CD8-positive, alpha-beta T cell (primary cell): ENCODE measurements at regions of chr18 and their contacts with region 1.

Region 1: DNA sequence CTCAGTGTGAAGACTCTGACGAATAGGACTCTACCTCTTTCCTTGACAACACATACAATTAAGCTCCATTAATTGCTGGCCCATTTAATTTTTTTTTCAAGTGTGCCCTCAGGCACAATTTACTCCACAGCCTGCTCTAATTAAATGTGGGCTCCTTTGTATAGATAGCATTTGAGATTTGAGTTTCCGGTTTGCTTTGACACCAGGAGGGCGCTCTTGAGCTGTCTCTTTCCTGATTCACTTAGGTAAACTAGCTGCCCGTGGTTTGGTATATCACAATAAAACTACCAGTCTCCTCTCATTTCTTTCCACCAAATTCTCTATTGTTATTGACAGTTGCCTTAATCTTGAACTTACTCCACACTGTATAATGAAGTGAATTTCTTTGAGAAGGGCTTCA is 666.0 kb downstream of the DSC3 start:
- DNase-seq: no peak
- ATAC-seq: no peak
- H3K4me3 ChIP-seq: no peak overlapping the region
- H3K4me3 Mint-ChIP-seq: no peak overlapping the region
- H3K27ac ChIP-seq: no peak overlapping the region
- H3K27ac Mint-ChIP-seq: no peak overlapping the region
- H3K4me1 ChIP-seq: no peaks in the 10 kb centered on the region
- H3K4me1 Mint-ChIP-seq: no peaks in the 10 kb centered on the region
- H3K27me3 ChIP-seq: no peaks in the 10 kb centered on the region
- H3K27me3 Mint-ChIP-seq: no peaks in the 10 kb centered on the region
- CTCF ChIP-seq: no peak

Region 2: DNA sequence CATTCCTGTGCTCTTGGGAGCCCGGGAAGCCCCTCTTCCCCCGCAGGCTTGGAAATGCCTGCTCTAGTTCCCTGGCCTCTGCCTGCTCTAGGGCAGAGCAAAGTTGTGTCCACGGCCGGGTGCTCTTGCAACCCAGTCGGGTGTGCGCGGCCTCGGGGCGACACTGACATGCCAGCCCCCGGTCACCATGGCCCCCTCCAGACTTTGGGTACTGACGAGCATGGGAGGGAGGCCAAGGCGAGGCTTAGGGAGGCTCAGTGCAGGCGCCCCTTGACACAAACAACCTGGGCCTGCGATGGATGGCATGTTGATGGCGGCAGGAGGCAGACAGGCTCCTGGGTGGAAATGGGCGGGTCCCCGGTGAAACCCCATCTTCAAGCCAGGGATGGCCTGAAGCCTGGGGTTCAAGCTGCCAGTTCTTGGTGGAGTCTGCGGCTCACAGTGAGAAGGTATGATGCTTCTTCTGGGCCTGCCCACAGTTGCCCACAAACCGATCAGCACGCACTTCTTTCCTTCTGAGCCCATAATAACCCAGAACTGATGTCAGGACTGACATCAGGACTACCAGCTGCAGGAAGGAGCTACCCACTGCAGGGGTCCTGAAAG is 23.8 kb before region 1 on chr18:
- CTCF ChIA-PET with region 1: interaction called, 3 read pairs
- POLR2A ChIA-PET with region 1: no interaction called
- intact Hi-C with region 1: loop called in 1 of 2 experiments (anchors 2 kb)
- DNase-seq: no peak
- ATAC-seq: no peak
- H3K4me3 ChIP-seq: no peak overlapping the region
- H3K4me3 Mint-ChIP-seq: no peak overlapping the region
- H3K27ac ChIP-seq: no peak overlapping the region
- H3K27ac Mint-ChIP-seq: no peak overlapping the region
- H3K4me1 ChIP-seq: no peaks in the 10 kb centered on the region
- H3K4me1 Mint-ChIP-seq: no peaks in the 10 kb centered on the region
- H3K27me3 ChIP-seq: no peaks in the 10 kb centered on the region
- H3K27me3 Mint-ChIP-seq: no peaks in the 10 kb centered on the region
- CTCF ChIP-seq: no peak

Region 3: DNA sequence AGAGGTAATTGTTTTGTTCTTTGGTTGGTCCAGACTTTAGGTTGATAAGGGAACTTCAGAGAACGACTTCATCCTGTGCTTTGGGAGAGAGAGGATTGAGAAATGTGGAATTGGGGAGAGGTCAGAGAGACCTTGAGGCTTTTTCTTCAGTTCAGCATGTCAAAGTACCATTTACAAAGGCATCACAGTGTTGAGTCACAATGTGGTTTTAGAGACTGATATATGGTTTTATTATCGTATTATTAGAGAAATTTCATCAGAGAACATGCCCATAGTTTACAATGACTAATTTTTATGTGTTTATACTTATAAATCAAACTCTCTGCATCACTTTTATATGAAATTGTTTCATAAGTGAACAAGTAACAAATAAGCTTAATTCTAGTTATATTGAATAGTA is 39.4 kb after region 1 on chr18:
- CTCF ChIA-PET with region 1: no interaction called
- POLR2A ChIA-PET with region 1: no interaction called
- intact Hi-C with region 1: loop called in 1 of 2 experiments (anchors 2 kb)
- DNase-seq: no peak
- ATAC-seq: no peak
- H3K4me3 ChIP-seq: no peak overlapping the region
- H3K4me3 Mint-ChIP-seq: no peak overlapping the region
- H3K27ac ChIP-seq: no peak overlapping the region
- H3K27ac Mint-ChIP-seq: no peak overlapping the region
- H3K4me1 ChIP-seq: no peaks in the 10 kb centered on the region
- H3K4me1 Mint-ChIP-seq: no peaks in the 10 kb centered on the region
- H3K27me3 ChIP-seq: no peaks in the 10 kb centered on the region
- H3K27me3 Mint-ChIP-seq: no peaks in the 10 kb centered on the region
- CTCF ChIP-seq: no peak